Activated T-helper 1 cell treated with anti-CD3 and anti-CD28 coated beads, Interleukin-12 subunit alpha, Interleukin-12 subunit beta, Interleukin-2, Interleukin-4 antibody, amounts not matched to agents 30 ng/mL and 10 ng/mL and 1 ng/mL, durations not matched to agents 14 hours and 24 hours and 36 hours (primary cell): ENCODE measurements at regions of chr7 and their contacts with region 1.

Region 1: DNA sequence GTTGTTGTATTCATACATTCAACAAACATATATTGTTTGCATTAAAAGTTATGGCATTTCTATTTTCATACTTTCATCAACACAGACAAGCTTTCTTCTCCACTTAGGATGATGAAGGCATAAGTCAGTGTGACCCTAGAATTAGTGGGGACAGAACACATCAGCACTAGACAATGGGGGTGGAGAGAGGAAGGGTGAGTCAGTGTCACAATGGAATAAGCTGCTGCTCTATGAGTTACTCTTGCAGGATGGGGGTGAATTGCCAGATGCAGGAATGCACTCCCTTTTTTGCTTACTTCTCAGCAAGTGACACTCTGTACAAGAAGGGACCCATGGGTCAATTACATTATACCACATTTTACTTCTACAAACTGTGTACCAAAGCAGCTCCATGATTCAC is 74.0 kb downstream of the DGKI start:
- DNase-seq: no peak
- H3K4me3 Mint-ChIP-seq: peak overlapping the region; percentile 72
- H3K27ac Mint-ChIP-seq: peak overlapping the region; percentile 42
- H3K4me1 Mint-ChIP-seq: peaks cover 11% of the 10 kb centered on the region
- H3K27me3 Mint-ChIP-seq: no peaks in the 10 kb centered on the region

Region 2: GRCh38 chr7:137656227-137656849 is 116.4 kb before region 1 on chr7:
- intact Hi-C with region 1: no loop called
- DNase-seq: peak; percentile 35
- H3K4me3 Mint-ChIP-seq: no peak overlapping the region
- H3K27ac Mint-ChIP-seq: no peak overlapping the region
- H3K4me1 Mint-ChIP-seq: no peaks in the 10 kb centered on the region
- H3K27me3 Mint-ChIP-seq: peaks cover 2% of the 10 kb centered on the region

Region 3: DNA sequence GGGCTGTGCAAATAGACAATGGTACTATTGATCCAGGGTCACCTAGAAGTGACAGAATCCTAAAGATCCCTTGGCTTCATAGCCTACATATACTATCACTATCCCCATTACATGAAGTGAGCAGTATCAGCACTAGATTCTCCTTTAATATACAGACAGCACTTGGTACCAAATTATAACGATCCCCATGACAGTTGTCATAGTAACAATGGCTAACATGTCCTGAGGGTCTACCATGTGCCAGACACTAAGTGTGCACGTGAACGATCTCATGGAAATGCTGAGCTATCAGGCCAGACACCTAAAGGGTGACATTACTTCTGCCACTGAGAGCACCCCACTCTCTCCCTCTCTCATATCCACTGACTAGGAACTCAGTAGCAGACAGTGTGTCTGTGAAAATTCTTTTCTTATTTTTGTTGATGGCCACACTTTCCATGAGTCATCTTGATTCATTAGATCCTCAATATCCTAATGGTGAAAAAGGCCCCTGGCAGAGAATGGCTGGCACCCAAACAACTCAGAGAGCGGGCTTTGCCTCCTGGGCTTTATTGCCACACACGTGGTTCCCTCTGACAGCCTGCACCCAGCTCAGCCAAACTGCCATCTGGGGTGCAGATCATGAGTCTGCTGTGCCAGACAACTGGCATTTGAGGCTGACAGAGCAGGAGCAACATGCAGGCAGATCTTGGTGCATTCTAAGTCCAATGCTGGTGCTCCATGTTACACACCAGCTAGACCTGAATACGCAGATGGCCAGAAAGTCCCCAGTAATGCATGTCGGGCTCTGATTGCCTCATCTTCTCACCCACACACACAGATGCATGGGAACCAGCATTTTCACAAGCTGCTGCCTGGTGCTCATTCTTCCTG is 102.3 kb before region 1 on chr7:
- intact Hi-C with region 1: loop called (anchors 5 kb)
- DNase-seq: no peak
- H3K4me3 Mint-ChIP-seq: no peak overlapping the region
- H3K27ac Mint-ChIP-seq: no peak overlapping the region
- H3K4me1 Mint-ChIP-seq: no peaks in the 10 kb centered on the region
- H3K27me3 Mint-ChIP-seq: no peaks in the 10 kb centered on the region

Region 4: GRCh38 chr7:137882261-137882668 is 109.5 kb after region 1 on chr7:
- intact Hi-C with region 1: loop called (anchors 5 kb)
- DNase-seq: peak; percentile 21
- H3K4me3 Mint-ChIP-seq: no peak overlapping the region
- H3K27ac Mint-ChIP-seq: peak overlapping the region; percentile 61
- H3K4me1 Mint-ChIP-seq: peaks cover 44% of the 10 kb centered on the region
- H3K27me3 Mint-ChIP-seq: no peaks in the 10 kb centered on the region